Posterior cingulate gyrus (tissue), 11 donors: ENCODE measurements at regions of chr1 and their contacts with region 1.

Region 1: GRCh38 chr1:25037174-25038074 is 107.3 kb upstream of the RUNX3 start:
- DNase-seq: peak in 2 of 10 donors; percentile 32 to 61

Region 2: DNA sequence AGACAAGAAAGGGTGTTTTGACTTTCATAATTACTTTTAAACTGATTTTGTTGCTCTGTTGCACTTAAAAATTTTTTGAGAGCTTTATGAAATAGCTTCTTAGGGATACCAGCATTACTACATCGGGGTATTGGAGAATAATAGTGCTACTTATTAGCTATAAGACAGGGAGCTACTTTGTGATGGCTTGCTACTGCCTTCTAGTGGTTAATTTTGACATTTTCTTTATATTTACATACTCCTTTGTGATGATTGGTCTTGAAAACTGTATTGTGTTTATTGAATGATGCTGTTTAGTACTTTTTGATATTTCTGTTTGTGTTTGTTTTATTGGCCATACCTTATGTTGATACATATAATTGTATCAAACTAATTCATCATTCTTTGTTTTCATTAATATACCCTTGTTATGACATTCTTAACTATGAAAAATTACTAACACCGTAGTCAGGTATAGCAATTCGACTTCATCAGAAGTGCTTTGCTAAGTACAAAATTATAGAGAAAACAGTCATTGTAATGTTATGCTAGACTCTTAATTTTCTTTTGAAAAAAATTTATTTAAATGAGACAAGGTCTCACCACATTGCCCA is 206.6 kb before region 1 on chr1:
- intact Hi-C with region 1: no loop called
- DNase-seq: no peak

Region 3: GRCh38 chr1:25204797-25205480 is 167.5 kb after region 1 on chr1:
- intact Hi-C with region 1: loop called (anchors 2 kb)
- DNase-seq: peak in 1 of 10 donors; percentile 15